Activated CD8-positive, alpha-beta T cell treated with anti-CD3 and anti-CD28 coated beads, Interleukin-2, amount 10 ng/mL, durations not matched to agents 7 days and 5 days (primary cell): ENCODE measurements at regions of chr6 and their contacts with region 1.

Region 1: GRCh38 chr6:11496152-11497060 is 41.1 kb upstream of the TMEM170B start:
- DNase-seq: peak; percentile 86
- ATAC-seq: peak; percentile 88
- H3K4me3 Mint-ChIP-seq: no peak overlapping the region
- H3K27ac Mint-ChIP-seq: no peak overlapping the region
- H3K4me1 Mint-ChIP-seq: peaks cover 10% of the 10 kb centered on the region
- H3K27me3 Mint-ChIP-seq: no peaks in the 10 kb centered on the region

Region 2: GRCh38 chr6:11064836-11065235 is 431.6 kb before region 1 on chr6:
- CTCF ChIA-PET with region 1: interaction called, 12 read pairs
- POLR2A ChIA-PET with region 1: no interaction called
- DNase-seq: no peak
- ATAC-seq: no peak
- H3K4me3 Mint-ChIP-seq: no peak overlapping the region
- H3K27ac Mint-ChIP-seq: no peak overlapping the region
- H3K4me1 Mint-ChIP-seq: no peaks in the 10 kb centered on the region
- H3K27me3 Mint-ChIP-seq: peaks cover 11% of the 10 kb centered on the region

Region 3: DNA sequence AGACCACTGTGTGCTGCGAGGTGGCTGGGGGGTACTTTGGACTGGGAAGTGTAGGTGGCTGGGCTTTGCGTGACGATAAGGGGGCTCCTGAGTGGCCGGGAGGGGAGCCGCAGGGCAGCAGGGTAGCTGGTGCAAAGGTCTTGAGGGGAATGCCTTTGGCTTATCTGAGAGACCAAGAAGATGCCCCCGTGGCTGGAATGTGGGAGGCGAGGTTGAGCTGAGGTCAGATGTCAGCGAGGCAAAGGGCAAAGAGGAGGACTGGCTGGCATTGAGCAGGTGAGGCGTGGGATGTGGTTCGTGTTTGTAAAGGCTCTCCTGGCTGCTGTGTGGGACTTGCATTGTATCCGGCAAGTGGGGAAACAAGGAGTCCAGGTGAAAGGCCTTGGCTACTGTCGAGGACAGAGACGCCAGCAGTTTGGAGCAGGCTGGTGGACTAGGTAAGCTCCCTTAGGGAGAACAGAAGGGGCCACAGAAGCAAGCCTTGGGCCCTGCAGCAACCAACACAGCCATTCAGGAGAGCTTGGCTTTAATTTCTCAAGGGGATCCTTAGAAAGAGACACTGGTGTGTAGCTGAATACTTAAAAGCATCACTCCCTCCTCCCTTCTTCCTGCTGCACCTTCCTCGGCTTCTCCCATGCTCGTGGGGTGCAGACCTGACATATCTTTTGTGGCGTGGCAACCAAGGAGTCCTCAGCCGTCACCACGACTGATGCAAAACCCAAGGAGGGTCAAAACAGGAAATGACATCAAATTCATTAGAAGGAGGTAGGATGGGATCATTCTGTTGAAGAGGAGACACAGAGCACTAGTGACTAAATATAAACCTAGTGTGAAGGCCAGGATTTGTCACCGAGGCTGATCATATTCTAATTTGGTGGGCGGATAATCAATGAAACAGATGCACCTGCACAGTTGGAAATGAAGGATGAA is 331.4 kb before region 1 on chr6:
- CTCF ChIA-PET with region 1: interaction called, 20 read pairs
- POLR2A ChIA-PET with region 1: no interaction called
- DNase-seq: peak; percentile 37
- ATAC-seq: peak; percentile 36
- H3K4me3 Mint-ChIP-seq: no peak overlapping the region
- H3K27ac Mint-ChIP-seq: peak overlapping the region; percentile 71
- H3K4me1 Mint-ChIP-seq: peaks cover 22% of the 10 kb centered on the region
- H3K27me3 Mint-ChIP-seq: no peaks in the 10 kb centered on the region

Region 4: DNA sequence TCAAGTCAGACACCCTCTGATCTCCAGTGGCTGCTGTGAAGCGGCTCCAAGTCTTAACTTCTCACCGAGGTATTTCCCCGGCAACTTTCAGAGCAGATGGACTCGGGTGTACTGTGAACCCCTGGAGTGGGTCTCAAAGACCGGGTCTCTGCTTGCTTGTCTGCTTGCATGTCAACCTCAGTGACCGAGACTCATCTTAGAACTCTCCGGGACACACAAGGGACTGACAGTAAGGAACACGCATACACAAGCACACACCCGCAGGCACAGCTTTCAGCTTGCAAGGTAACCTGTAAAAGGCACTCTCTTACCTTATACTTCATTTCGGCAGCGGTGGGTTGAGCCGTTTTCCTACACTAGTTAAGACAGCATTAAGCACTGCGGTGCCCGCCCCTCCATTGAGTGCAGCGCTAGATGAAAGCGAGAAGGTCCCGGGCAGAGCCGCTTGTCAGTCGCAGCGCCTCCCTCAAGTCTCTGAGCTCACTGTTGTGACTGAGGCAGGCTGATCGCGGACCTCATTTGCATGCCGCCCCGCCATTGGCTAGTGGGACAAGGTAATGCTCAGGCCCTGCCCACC is 264.1 kb before region 1 on chr6 and contains the start of gene NEDD9:
- CTCF ChIA-PET with region 1: interaction called, 21 read pairs
- POLR2A ChIA-PET with region 1: no interaction called
- DNase-seq: peak; percentile 98
- ATAC-seq: peak; percentile 98
- H3K4me3 Mint-ChIP-seq: peak within 1 kb of the TSS; percentile 95
- H3K27ac Mint-ChIP-seq: peak within 1 kb of the TSS; percentile 93
- H3K4me1 Mint-ChIP-seq: peaks cover 74% of the 10 kb centered on the region
- H3K27me3 Mint-ChIP-seq: no peaks in the 10 kb centered on the region
- total RNA-seq, gene NEDD9: 64.9 to 69.5 TPM

Region 5: GRCh38 chr6:11381801-11382513 is 114.4 kb before region 1 on chr6:
- CTCF ChIA-PET with region 1: interaction called, 26 read pairs
- POLR2A ChIA-PET with region 1: no interaction called
- DNase-seq: peak; percentile 87
- ATAC-seq: peak; percentile 95
- H3K4me3 Mint-ChIP-seq: peak overlapping the region; percentile 91
- H3K27ac Mint-ChIP-seq: peak overlapping the region; percentile 96
- H3K4me1 Mint-ChIP-seq: peaks cover 53% of the 10 kb centered on the region
- H3K27me3 Mint-ChIP-seq: peaks cover 2% of the 10 kb centered on the region

Region 6: DNA sequence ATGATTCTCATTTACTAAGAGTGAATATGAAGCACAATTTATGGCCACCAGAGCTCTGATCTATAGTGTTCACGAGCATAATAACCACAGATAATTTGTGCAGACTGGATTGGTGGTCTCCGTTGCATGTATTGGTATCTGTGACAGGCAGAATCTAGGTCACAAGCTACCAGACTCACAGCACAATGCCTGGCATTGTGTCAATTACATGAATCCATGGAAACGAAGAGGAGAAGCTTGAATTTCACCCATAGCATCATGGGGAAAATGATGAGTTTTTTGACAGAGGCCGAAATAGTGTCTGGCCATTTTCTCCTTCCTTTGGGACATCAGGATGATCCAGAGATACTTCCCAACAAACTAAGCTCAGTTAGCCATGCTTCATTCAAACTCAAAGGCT is 11.1 kb before region 1 on chr6:
- CTCF ChIA-PET with region 1: interaction called, 20 read pairs
- POLR2A ChIA-PET with region 1: no interaction called
- DNase-seq: no peak
- ATAC-seq: no peak
- H3K4me3 Mint-ChIP-seq: no peak overlapping the region
- H3K27ac Mint-ChIP-seq: no peak overlapping the region
- H3K4me1 Mint-ChIP-seq: no peaks in the 10 kb centered on the region
- H3K27me3 Mint-ChIP-seq: peaks cover 7% of the 10 kb centered on the region

Region 7: GRCh38 chr6:11609315-11610071 is 113.1 kb after region 1 on chr6:
- CTCF ChIA-PET with region 1: no interaction called
- POLR2A ChIA-PET with region 1: no interaction called
- DNase-seq: no peak
- ATAC-seq: no peak
- H3K4me3 Mint-ChIP-seq: no peak overlapping the region
- H3K27ac Mint-ChIP-seq: no peak overlapping the region
- H3K4me1 Mint-ChIP-seq: no peaks in the 10 kb centered on the region
- H3K27me3 Mint-ChIP-seq: peaks cover 3% of the 10 kb centered on the region

Region 8: GRCh38 chr6:11653028-11653583 is 156.7 kb after region 1 on chr6:
- CTCF ChIA-PET with region 1: no interaction called
- POLR2A ChIA-PET with region 1: no interaction called
- DNase-seq: peak; percentile 67
- ATAC-seq: peak; percentile 74
- H3K4me3 Mint-ChIP-seq: no peak overlapping the region
- H3K27ac Mint-ChIP-seq: no peak overlapping the region
- H3K4me1 Mint-ChIP-seq: peaks cover 20% of the 10 kb centered on the region
- H3K27me3 Mint-ChIP-seq: peaks cover 10% of the 10 kb centered on the region